HCT116 (cell line): ENCODE measurements at regions of chr11 and their contacts with region 1.

Region 1: GRCh38 chr11:63838678-63839507 is at the start of gene MARK2:
- DNase-seq: peak; percentile 97
- ATAC-seq: peak; percentile 90
- H3K4me3 ChIP-seq: peak within 1 kb of the TSS; percentile 96 to 98
- H3K27ac ChIP-seq: peak within 1 kb of the TSS; percentile 79
- H3K4me1 ChIP-seq: peaks cover 30 to 55% of the 10 kb centered on the region in 2 experiments
- H3K27me3 ChIP-seq: no peaks in the 10 kb centered on the region
- CTCF ChIP-seq: no peak
- POLR2A ChIP-seq: peak; percentile 18
- RAD21 ChIP-seq: no peak
- total RNA-seq, gene MARK2: 39.8 TPM

Region 2: GRCh38 chr11:63681321-63682049 is 157.4 kb before region 1 on chr11 and contains the start of gene RTN3:
- CTCF ChIA-PET with region 1: no interaction called
- POLR2A ChIA-PET with region 1: no interaction called
- RAD21 ChIA-PET with region 1: no interaction called
- intact Hi-C with region 1: no loop called
- DNase-seq: peak; percentile 96
- ATAC-seq: peak; percentile 94
- H3K4me3 ChIP-seq: peak within 1 kb of the TSS; percentile 78 to 90
- H3K27ac ChIP-seq: peak within 1 kb of the TSS; percentile 95
- H3K4me1 ChIP-seq: peaks cover 13 to 20% of the 10 kb centered on the region in 2 experiments
- H3K27me3 ChIP-seq: no peaks in the 10 kb centered on the region
- CTCF ChIP-seq: no peak
- POLR2A ChIP-seq: peak; percentile 93
- RAD21 ChIP-seq: no peak
- total RNA-seq, gene RTN3: 95.0 TPM

Region 3: GRCh38 chr11:63768237-63769043 is 70.5 kb before region 1 on chr11 and contains the start of gene ZFTA:
- CTCF ChIA-PET with region 1: interaction called, 8 read pairs
- POLR2A ChIA-PET with region 1: no interaction called
- RAD21 ChIA-PET with region 1: no interaction called
- intact Hi-C with region 1: loop called (anchors 2 kb)
- DNase-seq: no peak
- ATAC-seq: peak; percentile 74
- H3K4me3 ChIP-seq: peak within 1 kb of the TSS; percentile 78 to 88
- H3K27ac ChIP-seq: peak within 1 kb of the TSS; percentile 90
- H3K4me1 ChIP-seq: peaks cover 14 to 29% of the 10 kb centered on the region in 2 experiments
- H3K27me3 ChIP-seq: no peaks in the 10 kb centered on the region
- CTCF ChIP-seq: peak in 1 of 3 experiments; percentile 43; a peak in 4 of 6 replicates
- POLR2A ChIP-seq: no peak
- RAD21 ChIP-seq: peak; percentile 58
- total RNA-seq, gene ZFTA: 14.7 TPM

Region 4: DNA sequence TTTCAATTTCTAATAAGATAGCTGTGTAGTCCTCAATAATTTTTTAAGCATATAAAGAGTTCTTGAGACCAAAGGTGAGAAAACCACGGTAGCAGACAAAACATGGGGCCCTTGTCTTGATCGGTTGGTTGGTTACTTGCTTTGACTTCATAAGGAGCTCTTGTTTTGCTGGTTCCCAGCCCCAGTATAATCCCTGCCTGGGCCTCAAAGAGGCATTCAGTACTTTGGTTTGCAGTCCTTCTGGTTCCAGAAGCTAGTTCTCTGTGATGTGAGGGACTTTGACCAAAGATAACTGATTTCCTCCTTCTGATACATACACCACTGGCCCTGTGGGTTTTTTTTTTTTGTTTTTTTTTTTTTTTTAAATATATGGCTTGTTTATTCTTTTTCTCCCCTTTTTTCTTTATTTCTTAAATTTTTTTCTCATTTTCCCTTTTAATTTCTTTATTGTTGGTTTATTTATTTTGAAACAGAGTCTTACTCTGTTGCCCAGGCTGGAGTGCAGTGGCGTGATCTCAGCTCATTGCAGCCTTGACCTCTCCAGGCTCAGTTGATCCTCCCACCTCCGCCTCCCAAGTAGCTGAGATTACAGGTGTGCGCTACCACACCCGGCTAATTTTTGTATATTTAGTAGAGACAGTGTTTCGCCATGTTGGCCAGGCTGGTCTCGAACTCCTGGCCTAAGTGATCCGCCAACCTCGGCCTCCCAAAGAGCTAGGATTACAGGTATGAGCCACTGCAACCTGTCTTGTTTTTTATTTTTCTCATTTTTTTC is 17.3 kb after region 1 on chr11:
- CTCF ChIA-PET with region 1: no interaction called
- POLR2A ChIA-PET with region 1: no interaction called
- RAD21 ChIA-PET with region 1: no interaction called
- intact Hi-C with region 1: no loop called
- DNase-seq: no peak
- ATAC-seq: no peak
- H3K4me3 ChIP-seq: no peak overlapping the region
- H3K27ac ChIP-seq: no peak overlapping the region
- H3K4me1 ChIP-seq: no peaks in the 10 kb centered on the region; a peak in 1 of 4 replicates
- H3K27me3 ChIP-seq: no peaks in the 10 kb centered on the region
- CTCF ChIP-seq: no peak
- POLR2A ChIP-seq: no peak
- RAD21 ChIP-seq: no peak

Region 5: GRCh38 chr11:63871962-63872799 is 33.3 kb after region 1 on chr11:
- CTCF ChIA-PET with region 1: interaction called, 3 read pairs
- POLR2A ChIA-PET with region 1: interaction called, 3 read pairs
- RAD21 ChIA-PET with region 1: interaction called, 3 to 5 read pairs
- intact Hi-C with region 1: loop called (anchors 5 kb)
- DNase-seq: peak; percentile 60
- ATAC-seq: peak; percentile 99
- H3K4me3 ChIP-seq: no peak overlapping the region
- H3K27ac ChIP-seq: peak overlapping the region; percentile 15
- H3K4me1 ChIP-seq: peaks cover 7 to 26% of the 10 kb centered on the region in 2 experiments
- H3K27me3 ChIP-seq: no peaks in the 10 kb centered on the region
- CTCF ChIP-seq: peak; percentile 45 to 59 (median 52); a peak in 5 of 6 replicates
- POLR2A ChIP-seq: no peak
- RAD21 ChIP-seq: peak; percentile 82

Region 6: DNA sequence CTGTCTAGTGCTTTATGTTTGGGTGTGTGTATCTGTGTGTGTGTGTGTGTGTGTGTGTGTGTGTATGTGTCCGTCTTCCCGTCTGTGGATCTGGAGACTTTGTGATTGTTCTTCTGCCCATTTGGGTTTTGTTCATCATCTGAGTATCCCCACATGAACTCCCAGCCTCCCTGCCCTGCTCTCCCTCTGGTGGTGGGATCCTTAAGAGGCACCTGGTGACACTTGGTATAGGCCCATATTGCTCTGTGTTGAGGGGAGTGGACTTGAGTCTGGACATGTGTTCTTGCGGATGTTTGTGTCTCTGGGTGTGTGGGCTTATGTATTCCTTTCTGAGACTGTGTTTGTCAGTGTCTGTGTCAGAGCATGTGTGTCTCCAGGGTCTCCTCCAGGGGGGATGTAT is 62.8 kb after region 1 on chr11:
- CTCF ChIA-PET with region 1: interaction called, 3 read pairs
- POLR2A ChIA-PET with region 1: no interaction called
- RAD21 ChIA-PET with region 1: no interaction called
- intact Hi-C with region 1: loop called (anchors 1 kb)
- DNase-seq: no peak
- ATAC-seq: peak; percentile 69
- H3K4me3 ChIP-seq: no peak overlapping the region
- H3K27ac ChIP-seq: no peak overlapping the region
- H3K4me1 ChIP-seq: no peaks in the 10 kb centered on the region
- H3K27me3 ChIP-seq: no peaks in the 10 kb centered on the region
- CTCF ChIP-seq: peak; percentile 30 to 54 (median 47); a peak in 5 of 6 replicates
- POLR2A ChIP-seq: no peak
- RAD21 ChIP-seq: peak; percentile 47

Region 7: DNA sequence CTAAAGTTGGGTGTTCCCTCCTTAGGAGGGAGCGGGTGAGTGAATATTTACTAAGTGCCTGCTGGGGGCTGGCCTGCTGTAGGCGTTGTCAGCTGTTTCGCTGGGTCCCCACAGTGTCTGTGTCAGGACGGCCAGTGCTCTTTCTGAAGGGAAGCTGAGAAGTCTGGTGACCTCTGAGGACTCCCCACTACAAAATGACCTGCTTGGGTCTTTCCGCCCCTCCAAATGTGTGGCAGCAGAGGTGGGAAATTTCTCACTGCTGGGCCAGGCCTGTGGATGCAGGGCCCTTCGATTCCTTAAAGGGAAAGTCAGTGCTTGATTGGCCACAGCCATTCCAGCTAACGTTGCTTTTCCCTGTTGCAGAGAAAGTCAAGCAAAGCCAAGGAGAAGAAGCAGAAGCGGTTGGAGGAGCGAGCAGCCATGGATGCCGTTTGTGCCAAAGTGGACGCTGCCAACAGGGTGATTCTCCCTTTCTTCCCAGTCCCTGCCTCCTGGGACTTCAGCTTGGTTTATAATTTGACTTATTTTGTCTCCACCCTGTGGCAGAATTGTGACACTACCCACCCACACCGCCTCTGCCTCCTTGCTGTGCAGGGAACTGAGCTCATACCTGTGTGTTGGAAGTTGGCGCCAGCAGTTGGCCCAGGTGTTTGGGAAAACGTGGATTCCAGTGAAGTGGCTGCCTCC is 106.7 kb after region 1 on chr11:
- CTCF ChIA-PET with region 1: interaction called, 66 read pairs
- POLR2A ChIA-PET with region 1: interaction called, 5 read pairs
- RAD21 ChIA-PET with region 1: interaction called, 6 to 10 read pairs
- intact Hi-C with region 1: loop called (anchors 1 kb)
- DNase-seq: peak; percentile 36
- ATAC-seq: peak; percentile 97
- H3K4me3 ChIP-seq: no peak overlapping the region
- H3K27ac ChIP-seq: peak overlapping the region; percentile 3
- H3K4me1 ChIP-seq: peaks cover 0 to 12% of the 10 kb centered on the region in 2 experiments; a peak in 2 of 4 replicates
- H3K27me3 ChIP-seq: no peaks in the 10 kb centered on the region
- CTCF ChIP-seq: peak; percentile 65 to 87 (median 75)
- POLR2A ChIP-seq: no peak
- RAD21 ChIP-seq: peak; percentile 93